Activated B cell treated with CpG ODN at 0.5 μM for 24 hours (primary cell): ENCODE measurements at regions of chr2 and their contacts with region 1.

Region 1: DNA sequence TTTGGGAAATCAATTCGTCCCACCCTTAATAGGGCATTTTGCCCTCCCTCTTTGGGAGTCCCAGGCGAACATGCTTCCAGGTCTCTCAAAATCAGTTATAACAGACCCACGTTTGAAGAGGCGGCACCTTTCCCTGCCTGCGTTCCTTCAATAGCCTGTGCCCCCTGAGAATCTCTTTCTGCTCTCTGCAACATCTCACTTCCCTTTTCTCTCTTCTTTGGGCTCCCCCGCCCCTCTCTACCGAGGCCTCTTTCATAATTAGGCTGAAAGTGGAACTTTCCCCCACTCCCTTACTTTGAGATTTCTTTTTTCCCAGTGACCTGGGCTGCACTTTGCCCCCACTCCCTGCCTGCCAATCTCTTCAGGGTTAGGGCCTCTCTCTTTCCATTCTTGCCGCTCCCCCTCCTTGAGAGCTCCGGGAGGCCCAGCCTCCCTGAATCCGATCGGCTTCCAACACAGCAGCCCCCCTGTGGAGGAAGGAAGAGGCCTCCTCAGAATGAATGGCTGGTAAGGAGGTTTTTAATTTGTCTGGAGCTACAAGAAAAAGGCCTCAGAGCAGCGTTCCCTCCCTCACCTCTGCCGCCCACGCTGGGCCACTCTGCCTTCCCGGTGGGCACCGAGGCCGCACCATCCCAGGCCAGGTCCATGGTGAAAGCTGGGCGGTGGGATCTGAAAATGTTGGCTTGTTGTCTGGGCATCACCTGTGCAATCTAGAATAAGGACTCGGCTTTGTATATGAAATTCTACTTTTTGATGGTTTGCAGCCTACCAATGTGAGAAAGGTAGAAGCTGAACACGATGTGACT is 162.6 kb upstream of the SIX3 start:
- DNase-seq: peak; percentile 47
- ATAC-seq: peak; percentile 96
- H3K4me3 Mint-ChIP-seq: peak overlapping the region; percentile 83
- H3K27ac Mint-ChIP-seq: peak overlapping the region; percentile 77
- H3K4me1 Mint-ChIP-seq: peaks cover 30% of the 10 kb centered on the region
- H3K27me3 Mint-ChIP-seq: no peaks in the 10 kb centered on the region
- CTCF ChIP-seq: no peak

Region 2: GRCh38 chr2:44707945-44708660 is 70.8 kb before region 1 on chr2:
- CTCF ChIA-PET with region 1: no interaction called
- POLR2A ChIA-PET with region 1: interaction called, 5 read pairs
- intact Hi-C with region 1: loop called (anchors 1 kb)
- DNase-seq: no peak
- ATAC-seq: peak; percentile 84
- H3K4me3 Mint-ChIP-seq: peak overlapping the region; percentile 83
- H3K27ac Mint-ChIP-seq: peak overlapping the region; percentile 93
- H3K4me1 Mint-ChIP-seq: peaks cover 60% of the 10 kb centered on the region
- H3K27me3 Mint-ChIP-seq: no peaks in the 10 kb centered on the region
- CTCF ChIP-seq: no peak

Region 3: GRCh38 chr2:44715671-44716081 is 63.2 kb before region 1 on chr2:
- CTCF ChIA-PET with region 1: no interaction called
- POLR2A ChIA-PET with region 1: no interaction called
- intact Hi-C with region 1: loop called (anchors 1 kb)
- DNase-seq: no peak
- ATAC-seq: no peak
- H3K4me3 Mint-ChIP-seq: no peak overlapping the region
- H3K27ac Mint-ChIP-seq: peak overlapping the region; percentile 46
- H3K4me1 Mint-ChIP-seq: peaks cover 47% of the 10 kb centered on the region
- H3K27me3 Mint-ChIP-seq: no peaks in the 10 kb centered on the region
- CTCF ChIP-seq: no peak

Region 4: DNA sequence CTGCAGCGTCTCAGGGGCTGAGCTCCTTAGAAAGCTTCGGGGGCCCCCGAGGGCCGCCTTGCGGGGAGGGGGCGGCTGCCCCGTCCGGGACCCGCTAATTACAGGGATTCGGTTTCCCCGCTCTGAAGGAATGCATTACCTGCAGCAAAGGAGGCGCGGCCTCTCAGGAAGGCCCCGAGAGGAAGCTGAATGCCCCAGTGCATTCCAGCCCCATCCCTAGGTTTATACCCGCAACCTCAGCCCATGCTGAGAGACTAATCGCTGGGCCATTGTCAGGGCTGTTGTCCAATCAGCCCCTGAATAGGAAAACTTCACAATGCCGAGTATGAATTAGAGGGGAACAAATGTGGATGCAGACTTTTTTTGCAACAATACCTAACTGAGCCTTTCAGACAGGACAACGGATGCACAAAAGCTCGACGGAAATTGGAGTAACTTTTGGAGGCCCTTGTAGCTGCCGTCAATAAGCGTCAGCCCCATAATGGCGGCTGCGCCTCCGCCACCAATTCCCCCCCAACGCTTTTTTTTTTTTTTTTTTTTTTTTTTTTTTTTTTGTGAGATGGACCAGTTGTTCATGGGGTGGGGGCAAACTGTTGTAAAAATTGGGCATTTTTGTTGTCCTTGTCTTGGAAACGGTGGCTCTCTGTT is 24.0 kb after region 1 on chr2:
- CTCF ChIA-PET with region 1: no interaction called
- POLR2A ChIA-PET with region 1: no interaction called
- intact Hi-C with region 1: loop called (anchors 2 kb)
- DNase-seq: no peak
- ATAC-seq: no peak
- H3K4me3 Mint-ChIP-seq: peak overlapping the region; percentile 52
- H3K27ac Mint-ChIP-seq: no peak overlapping the region
- H3K4me1 Mint-ChIP-seq: peaks cover 23% of the 10 kb centered on the region
- H3K27me3 Mint-ChIP-seq: peaks cover 81% of the 10 kb centered on the region
- CTCF ChIP-seq: no peak